Left cardiac atrium (tissue), 4 donors: ENCODE measurements at regions of chr1 and their contacts with region 1.

Region 1: DNA sequence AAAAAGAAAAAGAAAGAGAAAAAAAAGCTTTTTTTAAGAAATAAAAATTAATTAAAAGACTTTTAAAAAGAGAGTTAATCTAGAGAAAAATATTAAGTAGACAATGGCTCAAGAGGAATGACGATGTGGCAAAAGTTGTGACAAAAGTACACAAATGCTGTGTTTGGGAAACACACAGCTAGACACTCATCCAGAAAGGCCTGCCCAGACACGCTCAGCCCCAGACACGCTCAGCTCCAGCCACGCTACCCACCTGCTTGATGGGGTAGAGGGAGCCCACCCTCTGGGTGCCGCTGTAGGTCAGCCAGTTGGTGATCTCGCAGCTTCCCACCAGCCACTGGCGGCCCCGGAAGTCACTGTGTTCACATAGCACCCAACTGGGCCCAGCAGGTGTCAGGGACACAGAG is 10.2 kb downstream of the CD52 start:
- DNase-seq: no peak
- ATAC-seq: no peak

Region 2: GRCh38 chr1:26363549-26364448 is 35.8 kb after region 1 on chr1:
- intact Hi-C with region 1: loop called in 1 of 2 experiments (anchors 5 kb)
- DNase-seq: peak; percentile 87
- ATAC-seq: peak; percentile 62 to 75